IMR-90 (cell line): ENCODE measurements at regions of chr15 and their contacts with region 1.

Region 1: GRCh38 chr15:71294886-71295638 is 179.8 kb downstream of the THSD4 start:
- DNase-seq: peak; percentile 100
- ATAC-seq: peak; percentile 77
- H3K4me3 ChIP-seq: no peak overlapping the region
- H3K27ac ChIP-seq: peak overlapping the region; percentile 98
- H3K4me1 ChIP-seq: peaks cover 28% of the 10 kb centered on the region
- H3K27me3 ChIP-seq: no peaks in the 10 kb centered on the region
- CTCF ChIP-seq: no peak
- POLR2A ChIP-seq: no peak
- RAD21 ChIP-seq: no peak; the same call in 1 of the 2 replicates

Region 2: DNA sequence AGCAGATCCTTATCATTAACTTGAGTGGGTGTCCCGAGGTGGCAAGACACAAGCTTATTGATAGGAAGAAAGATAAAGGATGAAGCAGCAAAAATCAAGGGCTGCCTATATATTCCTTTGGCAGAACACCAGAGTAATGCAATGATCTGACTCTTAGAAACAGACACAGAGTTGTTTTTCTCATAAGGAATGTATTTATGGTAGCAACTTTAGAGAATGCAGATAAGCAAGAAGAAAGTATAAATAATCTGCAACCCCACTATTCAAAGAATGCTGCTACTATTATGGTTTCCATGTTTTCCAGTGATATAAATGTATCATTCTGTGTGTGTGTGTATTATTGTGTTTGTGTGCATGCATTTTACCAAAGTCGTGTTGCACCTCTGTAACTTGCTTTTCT is 28.5 kb after region 1 on chr15:
- CTCF ChIA-PET with region 1: interaction called, 3 read pairs
- POLR2A ChIA-PET with region 1: interaction called, 5 read pairs
- dilution Hi-C with region 1: no loop called
- in situ Hi-C with region 1: no loop called
- intact Hi-C with region 1: loop called (anchors 2 kb)
- DNase-seq: peak; percentile 67
- ATAC-seq: peak; percentile 65
- H3K4me3 ChIP-seq: no peak overlapping the region
- H3K27ac ChIP-seq: peak overlapping the region; percentile 97
- H3K4me1 ChIP-seq: peaks cover 24% of the 10 kb centered on the region
- H3K27me3 ChIP-seq: no peaks in the 10 kb centered on the region
- CTCF ChIP-seq: no peak
- POLR2A ChIP-seq: no peak
- RAD21 ChIP-seq: no peak